ENCODE measurements at regions of chr3 and their contacts with region 1.

Region 1: GRCh38 chr3:85433319-85433718 is 474.5 kb downstream of the CADM2 start:
- DNase-seq: no peak
- ATAC-seq: no peak
- H3K4me3 ChIP-seq: no peak overlapping the region
- H3K27ac ChIP-seq: no peak overlapping the region
- H3K4me1 ChIP-seq: no peaks in the 10 kb centered on the region
- H3K27me3 ChIP-seq: no peaks in the 10 kb centered on the region
- CTCF ChIP-seq: no peak

Region 2: GRCh38 chr3:85342915-85343314 is 90.4 kb before region 1 on chr3:
- CTCF ChIA-PET with region 1: no interaction called
- POLR2A ChIA-PET with region 1: no interaction called
- in situ Hi-C with region 1: no loop called
- intact Hi-C with region 1: no loop called
- DNase-seq: peak; percentile 24
- ATAC-seq: peak; percentile 75
- H3K4me3 ChIP-seq: no peak overlapping the region
- H3K27ac ChIP-seq: no peak overlapping the region
- H3K4me1 ChIP-seq: no peaks in the 10 kb centered on the region
- H3K27me3 ChIP-seq: no peaks in the 10 kb centered on the region
- CTCF ChIP-seq: peak; percentile 55

Region 3: GRCh38 chr3:85377115-85377514 is 56.2 kb before region 1 on chr3:
- CTCF ChIA-PET with region 1: no interaction called
- POLR2A ChIA-PET with region 1: no interaction called
- in situ Hi-C with region 1: no loop called
- intact Hi-C with region 1: loop called (anchors 10 kb)
- DNase-seq: no peak
- ATAC-seq: no peak
- H3K4me3 ChIP-seq: no peak overlapping the region
- H3K27ac ChIP-seq: no peak overlapping the region
- H3K4me1 ChIP-seq: no peaks in the 10 kb centered on the region
- H3K27me3 ChIP-seq: no peaks in the 10 kb centered on the region
- CTCF ChIP-seq: no peak

Region 4: GRCh38 chr3:85726241-85726640 is 292.9 kb after region 1 on chr3:
- CTCF ChIA-PET with region 1: no interaction called
- POLR2A ChIA-PET with region 1: no interaction called
- in situ Hi-C with region 1: no loop called
- intact Hi-C with region 1: no loop called
- DNase-seq: peak; percentile 4
- ATAC-seq: no peak
- H3K4me3 ChIP-seq: no peak overlapping the region
- H3K27ac ChIP-seq: no peak overlapping the region
- H3K4me1 ChIP-seq: no peaks in the 10 kb centered on the region
- H3K27me3 ChIP-seq: no peaks in the 10 kb centered on the region
- CTCF ChIP-seq: no peak